A673 (cell line): ENCODE measurements at regions of chr4 and their contacts with region 1.

Region 1: DNA sequence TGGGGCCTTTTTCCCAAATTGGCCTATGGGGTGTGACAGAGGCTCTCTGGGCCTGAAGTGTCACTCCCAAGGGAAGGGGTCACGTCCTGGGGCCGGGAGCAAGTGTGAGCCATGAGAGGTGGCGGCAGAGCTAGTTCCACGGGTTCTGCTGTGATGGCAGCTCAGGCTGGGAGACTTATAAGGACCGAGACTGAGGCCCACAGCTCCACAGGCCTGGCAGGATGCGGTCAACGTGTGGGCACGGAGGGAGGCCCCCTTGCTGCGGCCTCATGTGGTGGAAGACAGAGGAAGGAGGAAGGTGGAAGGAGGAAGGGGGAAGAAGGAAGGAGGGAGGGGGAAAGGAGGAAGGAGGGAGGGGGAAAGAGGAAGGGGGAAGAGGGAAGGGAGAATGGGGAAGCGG is 7.2 kb upstream of the CPLX1 start:
- DNase-seq: no peak
- H3K4me3 ChIP-seq: no peak overlapping the region
- H3K27ac ChIP-seq: no peak overlapping the region
- H3K4me1 ChIP-seq: no peaks in the 10 kb centered on the region
- H3K27me3 ChIP-seq: no peaks in the 10 kb centered on the region
- CTCF ChIP-seq: no peak

Region 2: DNA sequence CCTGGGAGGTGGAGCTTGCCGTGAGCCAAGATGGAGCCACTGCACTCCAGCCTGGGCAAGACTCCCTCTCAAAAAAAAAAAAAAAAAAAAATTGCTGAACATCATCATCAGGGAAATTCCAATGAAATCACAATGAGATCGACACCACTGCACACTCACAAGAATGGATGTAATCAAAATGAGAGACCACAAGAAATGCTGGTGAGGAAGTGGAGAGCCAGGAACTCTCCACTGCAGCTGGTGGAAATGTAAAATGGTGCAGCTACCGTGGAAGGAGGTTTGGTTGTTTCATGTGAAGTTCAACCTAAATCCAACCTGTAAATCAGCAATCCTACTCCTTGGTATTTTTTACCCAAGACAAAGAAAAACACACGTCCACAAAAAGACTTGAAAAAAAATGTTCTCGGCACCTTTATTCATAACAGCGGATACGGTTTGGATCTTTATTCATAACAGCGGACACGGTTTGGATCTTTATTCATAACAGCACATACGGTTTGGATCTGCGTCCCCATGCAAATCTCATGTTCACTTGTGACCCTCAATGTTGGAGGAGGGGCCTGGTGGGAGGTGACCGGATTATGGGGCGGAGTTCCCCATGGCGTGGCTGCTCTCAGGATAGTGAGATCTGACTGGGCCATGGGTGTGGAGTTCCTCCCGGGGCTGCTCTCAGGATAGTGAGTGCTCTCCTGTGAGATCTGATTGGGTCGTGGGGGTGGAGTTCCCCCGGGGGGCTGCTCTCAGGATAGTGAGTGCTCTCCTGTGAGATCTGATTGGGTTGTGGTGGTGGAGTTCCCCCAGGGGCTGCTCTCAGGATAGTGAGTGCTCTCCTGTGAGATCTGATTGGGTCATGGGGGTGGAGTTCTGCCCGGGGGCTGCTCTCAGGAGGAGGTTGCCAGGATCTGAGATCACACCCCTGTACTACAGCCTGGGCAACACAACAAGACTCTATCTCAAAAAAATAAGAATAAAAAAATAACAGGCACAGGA is 91.2 kb after region 1 on chr4:
- CTCF ChIA-PET with region 1: no interaction called
- POLR2A ChIA-PET with region 1: no interaction called
- intact Hi-C with region 1: loop called (anchors 5 kb)
- DNase-seq: no peak
- H3K4me3 ChIP-seq: no peak overlapping the region
- H3K27ac ChIP-seq: no peak overlapping the region
- H3K4me1 ChIP-seq: peaks cover 6% of the 10 kb centered on the region
- H3K27me3 ChIP-seq: no peaks in the 10 kb centered on the region
- CTCF ChIP-seq: no peak